ENCODE measurements at regions of chr4 and their contacts with region 1.

Region 1: DNA sequence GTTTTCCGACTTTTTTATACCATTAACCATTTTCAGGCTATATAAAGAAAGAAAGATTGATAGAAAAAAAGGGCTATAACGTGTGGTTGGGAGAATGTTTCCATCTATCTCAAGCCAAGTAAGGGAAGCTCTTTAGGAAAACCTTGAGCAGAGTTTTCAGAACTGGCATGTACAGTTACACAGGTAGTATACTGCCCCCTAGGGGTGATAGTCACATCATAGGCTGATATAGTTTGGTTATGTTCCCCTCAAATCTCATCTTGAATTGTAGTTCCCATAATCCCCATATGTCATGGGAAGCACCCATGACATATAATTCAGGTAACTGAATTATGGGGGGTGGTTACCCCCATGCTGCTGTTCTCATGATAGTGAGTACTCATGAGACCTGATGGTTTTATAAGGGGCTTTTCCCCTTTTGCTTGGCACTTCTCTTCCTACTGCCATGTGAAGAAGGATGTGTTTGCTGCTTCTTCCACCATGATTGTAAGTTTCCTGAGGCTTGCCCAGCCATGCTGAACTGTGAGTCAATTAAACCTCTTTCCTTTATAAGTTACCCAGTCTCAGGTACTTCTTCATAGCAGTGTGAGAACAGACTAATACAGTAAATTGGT is 186.8 kb downstream of the TMA16 start:
- DNase-seq: no peak
- ATAC-seq: peak; percentile 93
- H3K4me3 ChIP-seq: no peak overlapping the region
- H3K27ac ChIP-seq: no peak overlapping the region
- H3K4me1 ChIP-seq: no peaks in the 10 kb centered on the region
- H3K27me3 ChIP-seq: no peaks in the 10 kb centered on the region
- CTCF ChIP-seq: peak; percentile 58 to 61 (median 60)
- EP300 ChIP-seq: no peak
- POLR2A ChIP-seq: no peak
- RAD21 ChIP-seq: peak; percentile 89

Region 2: DNA sequence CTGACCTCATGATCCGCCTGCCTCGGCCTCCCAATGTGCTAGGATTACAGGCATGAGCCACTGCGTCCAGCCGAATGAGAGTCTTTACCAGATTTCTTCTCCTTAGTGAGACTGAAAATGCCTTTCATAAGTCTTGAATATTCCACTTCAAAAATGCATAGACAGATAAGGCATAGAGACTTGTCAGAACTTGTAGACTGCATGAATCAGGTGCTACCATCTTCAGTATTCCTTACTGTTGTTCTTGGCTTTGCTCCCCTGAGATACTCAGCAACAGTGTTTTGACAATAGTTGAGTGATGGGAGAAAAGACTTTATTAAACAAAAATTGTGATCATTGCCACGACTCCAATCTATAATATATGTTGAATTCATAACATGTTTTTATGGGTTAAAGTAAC is 218.8 kb before region 1 on chr4:
- CTCF ChIA-PET with region 1: no interaction called
- POLR2A ChIA-PET with region 1: no interaction called
- RAD21 ChIA-PET with region 1: no interaction called
- SMC1A ChIA-PET with region 1: no interaction called
- in situ Hi-C with region 1: no loop called
- intact Hi-C with region 1: no loop called
- DNase-seq: no peak
- ATAC-seq: no peak
- H3K4me3 ChIP-seq: no peak overlapping the region
- H3K27ac ChIP-seq: no peak overlapping the region
- H3K4me1 ChIP-seq: no peaks in the 10 kb centered on the region
- H3K27me3 ChIP-seq: no peaks in the 10 kb centered on the region
- CTCF ChIP-seq: no peak
- EP300 ChIP-seq: no peak
- POLR2A ChIP-seq: no peak
- RAD21 ChIP-seq: no peak

Region 3: DNA sequence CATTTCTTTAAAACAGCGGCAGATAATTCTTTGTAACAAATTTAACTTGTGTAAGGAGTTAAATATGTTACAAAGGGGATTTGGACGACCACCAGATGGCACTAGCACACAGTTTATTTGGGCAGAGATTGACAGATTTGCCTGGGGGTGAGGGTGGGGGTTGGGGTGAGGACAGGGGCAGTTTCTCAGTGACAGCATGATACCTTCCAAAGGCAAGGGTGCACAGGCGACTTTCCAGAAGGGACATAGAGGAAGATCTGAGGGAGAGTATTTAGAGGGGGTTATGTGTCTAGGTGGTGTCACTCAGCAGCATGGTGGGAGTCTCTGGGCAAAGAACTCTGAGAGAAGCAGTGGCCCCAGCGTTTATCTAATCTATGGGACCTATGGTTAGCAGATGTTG is 196.4 kb before region 1 on chr4:
- CTCF ChIA-PET with region 1: no interaction called
- POLR2A ChIA-PET with region 1: no interaction called
- RAD21 ChIA-PET with region 1: no interaction called
- SMC1A ChIA-PET with region 1: no interaction called
- in situ Hi-C with region 1: no loop called
- intact Hi-C with region 1: loop called (anchors 2 kb)
- DNase-seq: no peak
- ATAC-seq: peak; percentile 87
- H3K4me3 ChIP-seq: no peak overlapping the region
- H3K27ac ChIP-seq: no peak overlapping the region
- H3K4me1 ChIP-seq: peaks cover 12% of the 10 kb centered on the region; the same call in 1 of the 2 replicates
- H3K27me3 ChIP-seq: no peaks in the 10 kb centered on the region
- CTCF ChIP-seq: peak; percentile 55 to 73 (median 59); a peak in 5 of 6 replicates
- EP300 ChIP-seq: no peak
- POLR2A ChIP-seq: no peak
- RAD21 ChIP-seq: peak; percentile 91

Region 4: GRCh38 chr4:163744861-163745260 is 63.5 kb after region 1 on chr4:
- CTCF ChIA-PET with region 1: interaction called, 10 read pairs
- POLR2A ChIA-PET with region 1: no interaction called
- RAD21 ChIA-PET with region 1: interaction called, 8 read pairs
- SMC1A ChIA-PET with region 1: interaction called, 8 read pairs
- in situ Hi-C with region 1: no loop called
- intact Hi-C with region 1: no loop called
- DNase-seq: peak; percentile 57
- ATAC-seq: peak; percentile 94
- H3K4me3 ChIP-seq: 0 out of 2 replicates have a peak overlapping the region, but pooled peaks have one; percentile 5
- H3K27ac ChIP-seq: peak overlapping the region; percentile 57
- H3K4me1 ChIP-seq: peaks cover 10% of the 10 kb centered on the region
- H3K27me3 ChIP-seq: no peaks in the 10 kb centered on the region
- CTCF ChIP-seq: no peak
- EP300 ChIP-seq: peak; percentile 22 to 58; a peak in 2 of 4 replicates
- POLR2A ChIP-seq: no peak
- RAD21 ChIP-seq: no peak

Region 5: DNA sequence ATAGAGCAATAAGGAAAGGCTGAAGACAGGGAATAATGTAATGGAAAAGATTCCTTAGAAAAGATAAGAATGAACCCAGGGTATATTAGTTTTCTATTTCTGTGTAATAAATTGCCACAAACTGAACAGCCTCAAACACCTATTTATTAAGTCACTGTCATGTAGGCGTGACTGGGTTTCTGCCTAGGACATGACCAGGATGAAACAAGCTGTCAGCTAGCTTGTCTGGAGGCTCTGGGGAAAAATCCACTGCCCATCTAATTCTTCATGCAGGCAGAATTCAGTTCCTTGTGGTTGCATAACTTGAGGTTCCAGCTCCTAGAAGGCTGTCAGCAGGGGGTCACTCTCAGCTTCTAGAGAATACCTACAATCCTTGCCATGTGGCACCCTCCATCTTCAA is 90.9 kb after region 1 on chr4:
- CTCF ChIA-PET with region 1: no interaction called
- POLR2A ChIA-PET with region 1: interaction called, 10 read pairs
- RAD21 ChIA-PET with region 1: no interaction called
- SMC1A ChIA-PET with region 1: interaction called, 5 read pairs
- in situ Hi-C with region 1: no loop called
- intact Hi-C with region 1: no loop called
- DNase-seq: no peak
- ATAC-seq: no peak
- H3K4me3 ChIP-seq: no peak overlapping the region
- H3K27ac ChIP-seq: no peak overlapping the region
- H3K4me1 ChIP-seq: no peaks in the 10 kb centered on the region
- H3K27me3 ChIP-seq: no peaks in the 10 kb centered on the region
- CTCF ChIP-seq: no peak
- EP300 ChIP-seq: no peak
- POLR2A ChIP-seq: no peak
- RAD21 ChIP-seq: no peak

Region 6: DNA sequence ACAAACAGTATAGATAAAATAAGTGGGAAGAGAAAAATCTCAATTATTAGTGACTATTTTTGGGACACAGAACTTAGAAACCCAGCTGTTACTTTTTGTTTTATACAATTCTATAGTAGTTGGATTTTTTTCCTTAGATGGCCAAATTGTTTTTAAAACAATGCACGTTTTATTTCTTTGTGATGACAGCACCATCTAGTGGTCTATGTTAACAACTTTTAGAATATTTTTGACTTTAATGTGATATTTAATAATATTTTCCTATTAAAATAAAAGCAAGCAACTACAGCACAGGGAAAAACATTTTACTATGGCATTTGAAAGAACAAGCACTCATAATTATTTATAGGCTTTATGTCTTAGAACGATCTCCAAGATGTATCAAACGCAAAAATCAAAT is 1067.1 kb after region 1 on chr4:
- CTCF ChIA-PET with region 1: no interaction called
- POLR2A ChIA-PET with region 1: no interaction called
- RAD21 ChIA-PET with region 1: no interaction called
- SMC1A ChIA-PET with region 1: no interaction called
- in situ Hi-C with region 1: no loop called
- intact Hi-C with region 1: loop called (anchors 10 kb)
- DNase-seq: no peak
- ATAC-seq: no peak
- H3K4me3 ChIP-seq: no peak overlapping the region
- H3K27ac ChIP-seq: no peak overlapping the region
- H3K4me1 ChIP-seq: no peaks in the 10 kb centered on the region
- H3K27me3 ChIP-seq: no peaks in the 10 kb centered on the region
- CTCF ChIP-seq: peak in 1 of 3 experiments; percentile 36; a peak in 2 of 6 replicates
- EP300 ChIP-seq: no peak
- POLR2A ChIP-seq: no peak
- RAD21 ChIP-seq: peak; percentile 23; the same call in 1 of the 2 replicates

Measured in GM12878 (cell line).